GM12878 (cell line): ENCODE measurements at regions of chr14 and their contacts with region 1.

Region 1: GRCh38 chr14:21557084-21557901 is 22.6 kb downstream of the OR10G3 start:
- DNase-seq: peak; percentile 61
- ATAC-seq: peak; percentile 87
- H3K4me3 ChIP-seq: peak overlapping the region; percentile 4; the same call in 1 of the 2 replicates
- H3K27ac ChIP-seq: no peak overlapping the region
- H3K4me1 ChIP-seq: no peaks in the 10 kb centered on the region
- H3K27me3 ChIP-seq: no peaks in the 10 kb centered on the region
- CTCF ChIP-seq: peak; percentile 48 to 74 (median 69)
- EP300 ChIP-seq: no peak
- POLR2A ChIP-seq: no peak
- RAD21 ChIP-seq: peak; percentile 92

Region 2: DNA sequence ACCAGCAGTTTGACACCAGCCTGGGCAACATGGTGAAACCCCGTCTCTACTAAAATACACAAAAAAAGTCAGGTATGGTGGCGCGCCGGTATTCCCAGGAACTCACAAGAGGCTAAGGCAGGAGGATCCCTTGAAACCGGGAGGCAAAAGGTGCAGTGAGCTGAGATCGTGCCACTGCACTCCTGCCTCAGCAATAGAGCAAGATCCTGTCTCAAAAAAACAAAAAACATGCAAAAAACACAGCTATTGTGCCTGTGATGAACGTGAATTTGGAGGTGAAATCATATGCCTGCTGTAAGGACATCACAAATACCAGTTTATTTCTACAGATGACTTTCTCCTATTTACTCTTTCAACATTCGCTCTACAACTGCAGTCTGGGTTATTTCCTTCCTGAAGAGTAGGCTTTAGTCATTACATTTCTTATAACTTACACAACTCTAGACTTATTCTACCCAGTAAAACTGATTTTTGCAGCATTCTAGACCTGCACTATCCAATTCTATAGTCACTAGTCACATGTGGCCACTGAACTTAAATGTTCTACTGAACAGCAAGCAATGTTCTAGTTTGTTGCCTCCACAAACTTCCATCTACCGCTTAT is 336.3 kb before region 1 on chr14:
- CTCF ChIA-PET with region 1: no interaction called
- POLR2A ChIA-PET with region 1: no interaction called
- RAD21 ChIA-PET with region 1: no interaction called
- SMC1A ChIA-PET with region 1: no interaction called
- in situ Hi-C with region 1: no loop called
- intact Hi-C with region 1: no loop called
- DNase-seq: no peak
- ATAC-seq: no peak
- H3K4me3 ChIP-seq: no peak overlapping the region
- H3K27ac ChIP-seq: no peak overlapping the region
- H3K4me1 ChIP-seq: peaks cover 4% of the 10 kb centered on the region
- H3K27me3 ChIP-seq: no peaks in the 10 kb centered on the region
- CTCF ChIP-seq: no peak
- EP300 ChIP-seq: no peak
- POLR2A ChIP-seq: no peak
- RAD21 ChIP-seq: no peak

Region 3: GRCh38 chr14:21505012-21505553 is 52.2 kb before region 1 on chr14:
- CTCF ChIA-PET with region 1: interaction called, 207 read pairs
- POLR2A ChIA-PET with region 1: interaction called, 4 read pairs
- RAD21 ChIA-PET with region 1: interaction called, 141 read pairs
- SMC1A ChIA-PET with region 1: interaction called, 133 read pairs
- in situ Hi-C with region 1: loop called (anchors 5 kb)
- intact Hi-C with region 1: no loop called
- DNase-seq: peak; percentile 46
- ATAC-seq: peak; percentile 85
- H3K4me3 ChIP-seq: peak overlapping the region; percentile 33; the same call in 1 of the 2 replicates
- H3K27ac ChIP-seq: peak overlapping the region; percentile 54
- H3K4me1 ChIP-seq: peaks cover 10% of the 10 kb centered on the region
- H3K27me3 ChIP-seq: no peaks in the 10 kb centered on the region
- CTCF ChIP-seq: no peak
- EP300 ChIP-seq: no peak
- POLR2A ChIP-seq: no peak
- RAD21 ChIP-seq: no peak